Activated CD8-positive, alpha-beta T cell treated with anti-CD3 and anti-CD28 coated beads, Interleukin-2, amount 10 ng/mL, durations not matched to agents 7 days and 5 days (primary cell): ENCODE measurements at regions of chr2 and their contacts with region 1.

Region 1: GRCh38 chr2:237421542-237422116 is 7.7 kb upstream of the COL6A3 start:
- DNase-seq: peak; percentile 83
- ATAC-seq: peak; percentile 94
- H3K4me3 Mint-ChIP-seq: peak overlapping the region; percentile 38
- H3K27ac Mint-ChIP-seq: peak overlapping the region; percentile 48
- H3K4me1 Mint-ChIP-seq: peaks cover 13% of the 10 kb centered on the region
- H3K27me3 Mint-ChIP-seq: peaks cover 24% of the 10 kb centered on the region

Region 2: GRCh38 chr2:237388036-237388435 is 33.6 kb before region 1 on chr2:
- CTCF ChIA-PET with region 1: no interaction called
- POLR2A ChIA-PET with region 1: no interaction called
- DNase-seq: no peak
- ATAC-seq: no peak
- H3K4me3 Mint-ChIP-seq: no peak overlapping the region
- H3K27ac Mint-ChIP-seq: no peak overlapping the region
- H3K4me1 Mint-ChIP-seq: no peaks in the 10 kb centered on the region
- H3K27me3 Mint-ChIP-seq: no peaks in the 10 kb centered on the region

Region 3: DNA sequence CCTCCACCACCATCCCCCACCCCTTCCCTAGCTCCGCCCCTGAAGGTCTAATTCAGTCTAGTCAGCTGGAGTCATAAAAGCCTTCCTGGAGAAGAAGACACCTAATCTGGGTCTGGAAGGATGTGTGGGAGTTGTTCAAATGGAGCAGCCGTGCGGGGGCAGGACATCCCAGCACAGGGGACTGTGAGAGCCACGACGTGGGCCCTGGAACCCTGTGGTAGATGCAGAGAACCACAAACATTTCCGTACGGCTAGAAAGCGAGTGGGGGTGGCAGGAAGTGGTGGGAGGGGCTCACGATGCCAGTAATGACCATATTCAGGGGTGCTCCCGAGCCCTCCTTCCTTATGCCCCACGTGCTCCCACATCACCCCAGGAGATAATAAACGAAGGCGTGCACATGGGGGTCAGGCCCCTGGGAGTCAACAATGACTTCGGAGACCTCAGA is 13.3 kb after region 1 on chr2:
- CTCF ChIA-PET with region 1: interaction called, 62 read pairs
- POLR2A ChIA-PET with region 1: interaction called, 4 read pairs
- DNase-seq: peak; percentile 86
- ATAC-seq: peak; percentile 77
- H3K4me3 Mint-ChIP-seq: peak overlapping the region; percentile 35
- H3K27ac Mint-ChIP-seq: peak overlapping the region; percentile 53
- H3K4me1 Mint-ChIP-seq: peaks cover 66% of the 10 kb centered on the region
- H3K27me3 Mint-ChIP-seq: no peaks in the 10 kb centered on the region

Region 4: DNA sequence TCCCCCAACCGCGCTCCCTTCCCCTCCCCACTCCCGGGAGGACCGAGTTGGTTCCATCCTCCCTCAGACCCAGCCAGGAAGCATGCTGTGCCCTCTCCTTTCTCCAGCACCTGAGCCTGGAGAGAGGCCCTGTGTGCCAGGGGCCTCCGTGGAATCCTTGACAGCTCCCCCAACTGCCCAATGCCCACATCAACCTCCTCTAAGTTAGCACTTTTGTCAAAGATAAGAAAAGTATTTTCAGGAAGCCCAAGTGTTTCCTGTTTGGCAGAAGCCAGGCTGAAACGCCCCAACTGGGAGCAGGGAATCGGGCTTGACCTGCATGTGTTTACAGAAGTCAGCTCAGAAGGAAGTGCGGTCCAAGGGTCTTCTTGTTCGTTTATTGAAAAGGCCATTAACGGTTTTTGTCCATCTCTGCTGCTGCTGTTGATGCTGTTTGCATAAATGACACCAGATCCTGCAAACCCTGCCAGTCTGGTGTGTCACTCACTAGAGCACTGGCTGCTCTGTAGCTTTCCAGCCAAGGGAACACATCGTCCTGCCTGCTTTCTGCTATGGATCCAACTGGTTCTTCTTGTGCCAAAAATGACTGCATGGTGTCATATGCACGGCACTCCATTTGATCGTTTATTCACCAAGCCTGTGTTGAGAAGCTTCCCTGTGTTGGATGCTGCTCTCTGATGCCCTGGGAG is 27.7 kb after region 1 on chr2:
- CTCF ChIA-PET with region 1: interaction called, 10 read pairs
- POLR2A ChIA-PET with region 1: no interaction called
- DNase-seq: no peak
- ATAC-seq: no peak
- H3K4me3 Mint-ChIP-seq: no peak overlapping the region
- H3K27ac Mint-ChIP-seq: no peak overlapping the region
- H3K4me1 Mint-ChIP-seq: no peaks in the 10 kb centered on the region
- H3K27me3 Mint-ChIP-seq: peaks cover 2% of the 10 kb centered on the region

Region 5: GRCh38 chr2:237474931-237475703 is 53.5 kb after region 1 on chr2:
- CTCF ChIA-PET with region 1: interaction called, 121 read pairs
- POLR2A ChIA-PET with region 1: interaction called, 4 read pairs
- DNase-seq: peak; percentile 78
- ATAC-seq: peak; percentile 95
- H3K4me3 Mint-ChIP-seq: peak overlapping the region; percentile 78
- H3K27ac Mint-ChIP-seq: peak overlapping the region; percentile 78
- H3K4me1 Mint-ChIP-seq: peaks cover 14% of the 10 kb centered on the region
- H3K27me3 Mint-ChIP-seq: peaks cover 23% of the 10 kb centered on the region

Region 6: GRCh38 chr2:237572021-237572741 is 150.6 kb after region 1 on chr2:
- CTCF ChIA-PET with region 1: interaction called, 23 read pairs
- POLR2A ChIA-PET with region 1: no interaction called
- DNase-seq: peak; percentile 89
- ATAC-seq: peak; percentile 98
- H3K4me3 Mint-ChIP-seq: no peak overlapping the region
- H3K27ac Mint-ChIP-seq: no peak overlapping the region
- H3K4me1 Mint-ChIP-seq: peaks cover 5% of the 10 kb centered on the region
- H3K27me3 Mint-ChIP-seq: no peaks in the 10 kb centered on the region

Region 7: GRCh38 chr2:237874585-237875161 is 453.0 kb after region 1 on chr2:
- CTCF ChIA-PET with region 1: no interaction called
- POLR2A ChIA-PET with region 1: no interaction called
- DNase-seq: no peak
- ATAC-seq: no peak
- H3K4me3 Mint-ChIP-seq: no peak overlapping the region
- H3K27ac Mint-ChIP-seq: no peak overlapping the region
- H3K4me1 Mint-ChIP-seq: peaks cover 15% of the 10 kb centered on the region
- H3K27me3 Mint-ChIP-seq: peaks cover 5% of the 10 kb centered on the region